ENCODE measurements at regions of chr10 and their contacts with region 1.

Region 1: GRCh38 chr10:43436400-43437140 is at the start of gene ZNF487:
- DNase-seq: peak; percentile 97
- H3K4me3 ChIP-seq: peak within 1 kb of the TSS; percentile 67 to 87 (median 74)
- H3K27ac ChIP-seq: peak within 1 kb of the TSS; percentile 90 to 99 (median 98)
- H3K4me1 ChIP-seq: peaks cover 11 to 25% (median 24%) of the 10 kb centered on the region in 4 donors
- H3K27me3 ChIP-seq: no peaks in the 10 kb centered on the region
- CTCF ChIP-seq: peak in 1 of 3 experiments; percentile 27
- EP300 ChIP-seq: peak; percentile 2
- POLR2A ChIP-seq: peak; percentile 5
- total RNA-seq, gene ZNF487: 9.1 to 10.1 (median 10.0) TPM

Region 2: GRCh38 chr10:43380610-43381222 is 55.9 kb before region 1 on chr10:
- intact Hi-C with region 1: no loop called
- DNase-seq: no peak
- H3K4me3 ChIP-seq: no peak overlapping the region
- H3K27ac ChIP-seq: no peak overlapping the region
- H3K4me1 ChIP-seq: no peaks in the 10 kb centered on the region
- H3K27me3 ChIP-seq: no peaks in the 10 kb centered on the region
- CTCF ChIP-seq: no peak
- EP300 ChIP-seq: no peak
- POLR2A ChIP-seq: no peak

Region 3: DNA sequence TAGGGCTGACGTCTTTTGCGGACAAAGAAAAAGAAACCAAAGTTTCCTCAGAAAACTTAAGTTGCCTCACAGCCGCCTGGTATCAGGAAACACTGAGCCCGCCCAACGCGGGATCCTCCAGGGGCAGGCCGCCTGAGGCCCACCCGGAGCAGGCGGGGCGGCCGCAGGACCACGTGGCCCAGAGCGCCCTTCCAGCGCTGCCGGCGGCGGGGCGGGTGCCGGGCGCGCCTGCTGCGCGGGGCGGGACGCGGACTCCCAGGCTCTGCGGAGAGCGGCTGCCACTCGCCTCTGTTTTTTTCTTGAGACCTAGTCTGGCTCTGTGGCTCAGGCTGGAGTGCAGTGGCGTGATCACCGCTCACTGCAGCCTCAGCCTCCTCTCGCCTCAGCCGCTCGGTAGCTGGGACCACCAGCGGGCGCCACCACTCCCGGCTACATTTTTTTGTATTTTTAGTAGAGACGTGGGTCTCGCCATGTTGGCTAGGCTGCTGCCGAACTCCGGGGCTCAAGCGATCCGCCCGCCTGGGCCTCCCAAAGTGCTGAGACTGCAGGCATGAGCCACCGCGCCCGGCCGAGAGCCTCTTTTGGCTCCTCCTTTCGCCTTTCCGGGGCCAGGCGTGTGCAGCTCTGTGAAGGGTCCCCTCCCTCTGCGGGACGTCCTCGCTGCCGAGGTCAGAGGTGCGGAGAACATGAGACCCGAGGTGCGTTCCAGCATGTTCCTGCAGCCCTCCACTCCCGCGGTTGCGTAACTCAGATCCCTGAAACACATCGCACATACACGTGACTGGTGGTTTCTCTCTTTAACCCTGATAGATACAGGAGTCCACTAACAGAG is 16.0 kb before region 1 on chr10:
- intact Hi-C with region 1: loop called (anchors 1 kb)
- DNase-seq: peak; percentile 96
- H3K4me3 ChIP-seq: peak overlapping the region; percentile 59 to 70 (median 68)
- H3K27ac ChIP-seq: peak overlapping the region; percentile 92 to 99 (median 98)
- H3K4me1 ChIP-seq: peaks cover 12 to 23% (median 19%) of the 10 kb centered on the region in 4 donors
- H3K27me3 ChIP-seq: no peaks in the 10 kb centered on the region
- CTCF ChIP-seq: peak in 1 of 3 experiments; percentile 16
- EP300 ChIP-seq: no peak
- POLR2A ChIP-seq: peak; percentile 73